ENCODE measurements at regions of chr19 and their contacts with region 1.

Region 1: DNA sequence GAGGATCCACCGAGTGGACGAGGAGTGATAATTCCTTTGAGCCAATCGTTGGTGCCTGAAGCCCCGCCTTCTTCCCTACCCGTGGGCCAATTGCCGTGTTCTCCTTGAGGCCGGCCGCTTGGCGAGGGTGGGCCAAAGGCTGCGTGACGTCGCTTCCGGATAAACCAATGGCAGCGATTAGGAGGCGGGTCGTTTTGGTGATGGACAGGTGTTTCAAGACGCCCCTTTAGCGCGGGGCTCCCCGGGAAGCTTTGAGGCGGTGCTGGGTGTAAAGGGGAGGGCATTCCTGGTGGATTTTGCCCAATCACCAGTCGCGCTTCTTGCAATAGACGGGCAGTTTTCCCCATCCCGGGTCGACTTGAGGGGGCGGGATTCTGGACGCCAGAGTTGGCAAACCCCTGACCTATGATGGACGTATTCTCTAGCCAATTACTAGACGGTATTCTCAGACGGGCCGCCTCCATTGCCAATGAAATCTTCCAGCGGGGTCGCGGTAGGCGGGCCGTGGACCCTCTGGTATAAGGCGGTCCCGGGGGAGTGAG is 310 bp upstream of the PRMT1 start:
- DNase-seq: peak; percentile 93
- ATAC-seq: peak; percentile 67
- H3K4me3 Mint-ChIP-seq: peak overlapping the region; percentile 99
- H3K27ac Mint-ChIP-seq: peak overlapping the region; percentile 99
- H3K4me1 Mint-ChIP-seq: peaks cover 70% of the 10 kb centered on the region
- H3K27me3 Mint-ChIP-seq: no peaks in the 10 kb centered on the region
- CTCF ChIP-seq: no peak

Region 2: GRCh38 chr19:49391581-49392399 is 285.0 kb before region 1 on chr19:
- CTCF ChIA-PET with region 1: no interaction called
- POLR2A ChIA-PET with region 1: no interaction called
- intact Hi-C with region 1: loop called (anchors 5 kb)
- DNase-seq: peak; percentile 67
- ATAC-seq: peak; percentile 51
- H3K4me3 Mint-ChIP-seq: peak overlapping the region; percentile 42
- H3K27ac Mint-ChIP-seq: peak overlapping the region; percentile 84
- H3K4me1 Mint-ChIP-seq: peaks cover 46% of the 10 kb centered on the region
- H3K27me3 Mint-ChIP-seq: no peaks in the 10 kb centered on the region
- CTCF ChIP-seq: peak; percentile 25

Region 3: DNA sequence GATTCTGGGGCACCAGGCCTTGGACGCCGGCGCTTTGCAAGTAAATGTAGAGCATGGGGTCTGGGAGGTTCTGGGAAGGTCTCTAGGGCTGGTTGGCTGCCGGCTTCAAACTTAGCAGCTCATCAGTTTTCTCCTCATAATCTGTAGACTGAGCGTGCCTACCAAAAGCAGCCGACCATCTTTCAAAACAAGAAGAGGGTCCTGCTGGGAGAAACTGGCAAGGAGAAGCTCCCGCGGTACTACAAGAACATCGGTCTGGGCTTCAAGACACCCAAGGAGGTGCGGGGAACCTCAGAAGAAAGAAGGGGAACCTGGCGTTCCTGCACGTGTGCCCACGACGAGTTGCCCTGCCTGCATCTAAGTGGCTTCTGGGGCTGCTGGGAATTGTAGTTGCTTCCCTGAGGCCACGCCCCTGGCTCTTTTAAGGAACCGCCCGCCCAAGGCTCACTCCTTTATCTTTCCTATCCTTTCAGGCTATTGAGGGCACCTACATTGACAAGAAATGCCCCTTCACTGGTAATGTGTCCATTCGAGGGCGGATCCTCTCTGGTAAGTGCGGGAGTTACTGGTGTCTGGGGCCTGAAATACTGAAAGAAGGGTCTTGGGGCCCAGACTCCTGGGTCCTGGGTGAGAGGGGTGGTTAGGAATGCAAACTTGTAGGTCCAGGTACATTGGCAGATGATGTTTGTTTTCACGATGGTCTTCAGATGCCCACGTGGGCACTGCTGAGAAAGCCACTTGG is 179.5 kb before region 1 on chr19:
- CTCF ChIA-PET with region 1: no interaction called
- POLR2A ChIA-PET with region 1: interaction called, 27 read pairs
- intact Hi-C with region 1: loop called (anchors 1 kb)
- DNase-seq: peak; percentile 55
- ATAC-seq: peak; percentile 7
- H3K4me3 Mint-ChIP-seq: peak overlapping the region; percentile 93
- H3K27ac Mint-ChIP-seq: peak overlapping the region; percentile 97
- H3K4me1 Mint-ChIP-seq: peaks cover 68% of the 10 kb centered on the region
- H3K27me3 Mint-ChIP-seq: no peaks in the 10 kb centered on the region
- CTCF ChIP-seq: no peak

Region 4: DNA sequence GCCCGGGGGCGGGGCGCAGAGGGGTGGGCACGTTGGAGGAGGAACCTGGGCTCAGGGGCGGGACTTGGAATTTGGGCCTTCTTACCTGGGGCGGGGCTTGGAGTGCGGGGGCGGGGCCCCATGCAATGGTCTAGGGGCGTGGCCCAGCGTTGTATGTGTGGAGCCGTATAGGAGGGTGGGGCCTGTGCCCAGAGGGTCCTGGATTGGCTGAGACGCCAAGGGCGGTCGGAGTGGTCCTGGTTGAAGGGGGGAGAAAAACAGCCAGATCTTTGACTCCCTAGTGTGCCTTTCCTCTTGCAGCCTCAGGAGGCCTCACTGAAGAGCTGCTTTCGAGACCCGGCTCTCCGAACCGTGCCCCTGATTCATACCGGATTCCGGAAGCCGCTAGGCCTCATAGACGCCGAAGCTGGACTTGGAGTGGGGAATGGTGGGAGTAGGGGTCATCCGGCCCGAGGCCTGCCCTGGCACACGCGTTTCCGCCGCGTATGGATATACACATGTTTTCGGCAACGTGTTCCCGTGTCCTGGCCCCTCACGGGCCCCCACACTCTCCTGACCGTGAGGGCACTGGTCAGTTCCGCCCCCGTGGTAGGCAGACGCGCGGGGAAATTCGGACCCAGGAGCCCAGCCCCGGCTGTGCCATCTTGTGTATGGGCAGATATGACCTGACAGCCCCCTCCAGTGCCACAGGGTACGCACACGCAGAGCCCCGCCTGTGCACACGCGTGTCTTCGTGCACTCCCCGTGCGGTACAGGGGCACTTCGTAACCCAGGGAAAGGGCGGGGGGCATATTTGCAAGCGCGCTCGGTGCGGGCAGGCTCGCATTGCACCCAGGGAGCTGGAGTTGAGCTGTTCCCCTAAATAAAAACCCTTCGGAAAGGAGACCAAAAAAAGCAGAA is 86.4 kb before region 1 on chr19:
- CTCF ChIA-PET with region 1: no interaction called
- POLR2A ChIA-PET with region 1: interaction called, 69 read pairs
- intact Hi-C with region 1: loop called (anchors 1 kb)
- DNase-seq: peak; percentile 96
- ATAC-seq: peak; percentile 81
- H3K4me3 Mint-ChIP-seq: peak overlapping the region; percentile 85
- H3K27ac Mint-ChIP-seq: peak overlapping the region; percentile 89
- H3K4me1 Mint-ChIP-seq: peaks cover 34% of the 10 kb centered on the region
- H3K27me3 Mint-ChIP-seq: no peaks in the 10 kb centered on the region
- CTCF ChIP-seq: no peak

Region 5: DNA sequence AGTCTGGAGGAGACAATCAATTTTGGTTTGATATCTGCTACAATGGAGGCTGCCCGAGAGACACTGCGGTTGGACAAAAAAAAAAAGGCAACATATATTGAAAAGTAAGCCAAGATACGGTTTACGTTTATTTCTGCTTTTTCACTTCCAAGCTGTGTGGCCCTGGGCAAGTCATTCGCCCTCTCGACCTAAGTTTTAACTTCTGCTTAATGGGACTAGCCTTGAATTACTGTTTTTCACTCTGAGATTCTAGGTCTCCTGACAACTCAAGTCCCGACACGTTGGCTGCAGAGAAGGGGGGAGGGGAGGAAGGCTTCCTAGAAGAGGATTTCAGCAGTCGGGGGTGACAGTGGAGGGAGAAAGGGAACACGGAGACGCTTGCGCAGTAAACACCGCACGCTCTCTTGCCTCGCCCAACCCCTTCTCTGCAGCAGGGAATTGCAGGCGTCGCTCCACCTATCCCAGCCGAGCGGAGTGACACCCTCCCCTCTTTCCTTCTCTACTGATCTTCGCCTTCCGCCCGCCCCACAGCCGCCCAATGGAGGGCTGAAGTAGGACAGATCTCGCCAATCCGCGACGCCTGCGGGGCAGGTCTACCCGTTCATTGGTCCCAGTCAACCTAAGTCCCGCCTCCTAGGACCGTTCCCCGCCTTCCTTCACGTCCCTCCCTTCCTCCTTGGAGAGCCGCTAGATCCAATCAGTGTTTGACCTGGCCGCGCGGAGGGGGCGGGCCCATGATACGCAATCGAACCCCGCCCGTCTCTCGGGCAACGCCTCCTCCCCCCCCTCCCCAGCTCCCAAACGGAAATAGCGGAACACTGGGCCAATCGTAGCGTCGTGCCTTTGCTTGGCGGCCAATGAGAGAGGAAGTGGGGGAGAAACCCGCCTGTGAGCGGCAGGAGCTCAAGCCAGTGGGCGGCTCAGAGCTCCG is 89.5 kb after region 1 on chr19:
- CTCF ChIA-PET with region 1: no interaction called
- POLR2A ChIA-PET with region 1: interaction called, 15 read pairs
- intact Hi-C with region 1: loop called (anchors 1 kb)
- DNase-seq: peak; percentile 93
- ATAC-seq: peak; percentile 87
- H3K4me3 Mint-ChIP-seq: peak overlapping the region; percentile 88
- H3K27ac Mint-ChIP-seq: peak overlapping the region; percentile 96
- H3K4me1 Mint-ChIP-seq: peaks cover 33% of the 10 kb centered on the region
- H3K27me3 Mint-ChIP-seq: no peaks in the 10 kb centered on the region
- CTCF ChIP-seq: no peak

Region 6: GRCh38 chr19:49983645-49984229 is 307.0 kb after region 1 on chr19:
- CTCF ChIA-PET with region 1: no interaction called
- POLR2A ChIA-PET with region 1: no interaction called
- intact Hi-C with region 1: loop called (anchors 2 kb)
- DNase-seq: peak; percentile 66
- ATAC-seq: peak; percentile 74
- H3K4me3 Mint-ChIP-seq: no peak overlapping the region
- H3K27ac Mint-ChIP-seq: no peak overlapping the region
- H3K4me1 Mint-ChIP-seq: peaks cover 2% of the 10 kb centered on the region
- H3K27me3 Mint-ChIP-seq: no peaks in the 10 kb centered on the region
- CTCF ChIP-seq: peak; percentile 63

Region 7: GRCh38 chr19:50030225-50030624 is 353.5 kb after region 1 on chr19:
- CTCF ChIA-PET with region 1: no interaction called
- POLR2A ChIA-PET with region 1: no interaction called
- intact Hi-C with region 1: no loop called
- DNase-seq: no peak
- ATAC-seq: no peak
- H3K4me3 Mint-ChIP-seq: no peak overlapping the region
- H3K27ac Mint-ChIP-seq: no peak overlapping the region
- H3K4me1 Mint-ChIP-seq: peaks cover 21% of the 10 kb centered on the region
- H3K27me3 Mint-ChIP-seq: no peaks in the 10 kb centered on the region
- CTCF ChIP-seq: no peak

Measured in activated B cell treated with CpG ODN at 0.5 μM for 24 hours (primary cell).